SK-N-SH (cell line): ENCODE measurements at regions of chr2 and their contacts with region 1.

Region 1: DNA sequence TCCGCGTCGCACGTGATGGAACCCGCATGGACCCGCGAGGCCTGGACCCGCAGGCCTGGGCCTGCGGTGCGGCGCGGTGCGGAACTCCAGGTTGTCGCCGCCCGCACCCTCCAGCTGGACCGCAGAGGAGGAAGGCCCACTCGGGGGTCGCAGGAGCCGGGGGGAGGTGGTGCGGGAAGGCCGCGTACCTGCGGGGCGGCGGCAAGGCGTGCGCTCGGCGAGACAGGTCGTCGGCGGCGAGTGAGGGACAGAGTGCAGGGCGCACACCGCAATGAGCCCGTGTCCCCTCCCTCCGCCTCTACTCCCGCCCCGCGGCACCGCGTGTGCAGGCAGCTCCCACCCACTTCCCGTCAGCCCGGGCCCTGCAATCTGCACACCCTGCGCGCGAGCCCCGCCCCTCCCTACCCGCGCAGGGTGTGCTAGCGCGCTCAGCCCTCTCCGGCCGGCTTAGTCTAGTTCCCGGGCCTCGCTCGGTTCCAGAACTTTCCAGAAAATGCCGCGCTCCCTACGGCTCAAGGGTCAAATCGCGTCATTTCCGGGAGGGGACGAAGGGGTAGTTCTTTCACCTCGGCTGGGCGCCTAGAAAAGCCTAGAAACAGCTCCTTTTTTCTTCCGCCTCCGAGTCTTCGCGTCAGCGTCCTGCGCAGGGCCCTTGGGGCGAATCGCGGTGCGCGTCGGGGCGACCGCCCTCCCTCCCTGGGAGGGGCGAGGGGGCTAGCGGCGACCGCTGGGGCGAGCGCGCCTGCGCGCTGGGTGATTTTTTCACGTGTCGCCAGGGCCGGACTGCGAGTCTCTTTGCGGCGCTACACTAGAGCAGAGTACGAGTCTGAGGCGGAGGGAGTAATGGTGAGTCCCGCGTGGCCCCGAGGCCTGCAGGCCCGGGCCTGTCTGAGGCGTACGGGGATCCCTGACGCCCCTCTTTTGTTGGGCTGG is at the starts of genes HSPD1 and HSPE1:
- DNase-seq: peak; percentile 98
- H3K4me3 ChIP-seq: peak within 1 kb of the TSS; percentile 71 to 92
- H3K27ac ChIP-seq: peak within 1 kb of the TSS; percentile 88 to 98
- H3K4me1 ChIP-seq: peaks cover 26 to 29% of the 10 kb centered on the region in 2 experiments
- H3K27me3 ChIP-seq: no peaks in the 10 kb centered on the region
- CTCF ChIP-seq: no peak
- EP300 ChIP-seq: peak; percentile 60 to 98; a peak in 3 of 4 replicates
- RAD21 ChIP-seq: no peak
- polyA plus RNA-seq, gene HSPD1: 212 and 227 TPM in 2 replicates
- polyA plus RNA-seq, gene HSPE1: 130 and 142 TPM in 2 replicates

Region 2: DNA sequence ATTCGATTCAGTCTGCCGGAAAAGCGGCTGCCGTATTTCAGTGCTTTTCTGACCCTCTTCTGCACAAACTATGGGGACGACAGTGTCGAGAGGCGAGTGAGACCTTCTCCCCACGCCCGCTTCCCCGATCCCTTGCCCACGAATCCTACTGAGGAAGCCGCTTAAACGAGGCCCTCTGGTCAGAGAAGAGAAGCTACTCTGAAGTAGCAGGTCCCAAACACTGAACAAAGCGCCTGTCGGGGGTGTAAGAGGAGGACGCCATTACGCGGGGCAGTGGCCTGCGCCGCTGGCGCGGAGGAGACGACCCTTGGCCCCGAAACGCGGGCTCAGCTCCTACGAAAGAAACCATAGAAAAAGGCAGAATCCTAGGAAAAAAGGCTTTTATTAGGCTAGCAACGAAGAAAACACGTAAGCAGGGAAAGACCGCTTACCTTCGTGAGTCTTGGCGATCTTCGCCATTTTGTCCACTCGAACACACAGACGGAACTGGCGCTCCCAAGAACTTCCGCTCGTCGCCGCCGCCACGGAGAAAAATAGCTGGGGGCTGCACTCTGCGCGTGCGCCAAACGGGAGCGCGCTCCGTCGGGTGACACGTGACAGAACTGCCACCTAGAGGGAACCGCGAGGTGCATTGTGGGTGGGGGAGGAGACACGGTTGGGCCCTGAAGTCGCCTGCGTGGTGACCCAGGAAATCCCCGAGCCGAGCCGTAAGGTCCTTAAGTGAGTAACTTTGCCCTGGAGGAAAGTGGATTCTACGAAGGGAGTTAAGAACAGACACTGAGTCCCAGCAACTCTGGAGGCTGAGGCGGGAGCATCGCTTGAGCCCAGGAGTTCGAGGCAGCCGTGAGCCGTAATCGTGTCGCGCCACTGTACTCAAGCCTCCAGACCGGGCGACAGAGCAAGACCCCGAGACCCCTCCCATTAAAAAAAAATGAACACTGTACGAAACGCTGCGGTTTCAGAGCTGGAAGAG is 65.0 kb before region 1 on chr2 and contains the start of gene SF3B1:
- CTCF ChIA-PET with region 1: no interaction called
- POLR2A ChIA-PET with region 1: interaction called, 14 read pairs
- DNase-seq: peak; percentile 95
- H3K4me3 ChIP-seq: peak within 1 kb of the TSS; percentile 84 to 91
- H3K27ac ChIP-seq: peak within 1 kb of the TSS; percentile 95
- H3K4me1 ChIP-seq: peaks cover 5 to 14% of the 10 kb centered on the region in 2 experiments; a peak in 3 of 4 replicates
- H3K27me3 ChIP-seq: no peaks in the 10 kb centered on the region
- CTCF ChIP-seq: no peak
- EP300 ChIP-seq: no peak
- RAD21 ChIP-seq: no peak
- polyA plus RNA-seq, gene SF3B1: 162 and 276 TPM in 2 replicates

Region 3: GRCh38 chr2:197515739-197516392 is 16.0 kb after region 1 on chr2 and contains the start of gene MOB4:
- CTCF ChIA-PET with region 1: interaction called, 11 read pairs
- POLR2A ChIA-PET with region 1: interaction called, 46 read pairs
- DNase-seq: peak; percentile 97
- H3K4me3 ChIP-seq: peak within 1 kb of the TSS; percentile 77 to 89
- H3K27ac ChIP-seq: peak within 1 kb of the TSS; percentile 79 to 97
- H3K4me1 ChIP-seq: peaks cover 0 to 8% of the 10 kb centered on the region in 2 experiments
- H3K27me3 ChIP-seq: no peaks in the 10 kb centered on the region
- CTCF ChIP-seq: no peak
- EP300 ChIP-seq: peak; percentile 98 to 100
- RAD21 ChIP-seq: no peak
- polyA plus RNA-seq, gene MOB4: 22.0 and 24.6 TPM in 2 replicates